Activated CD4-positive, alpha-beta T cell treated with anti-CD3 and anti-CD28 coated beads for 36 hours (primary cell): ENCODE measurements at regions of chr1 and their contacts with region 1.

Region 1: DNA sequence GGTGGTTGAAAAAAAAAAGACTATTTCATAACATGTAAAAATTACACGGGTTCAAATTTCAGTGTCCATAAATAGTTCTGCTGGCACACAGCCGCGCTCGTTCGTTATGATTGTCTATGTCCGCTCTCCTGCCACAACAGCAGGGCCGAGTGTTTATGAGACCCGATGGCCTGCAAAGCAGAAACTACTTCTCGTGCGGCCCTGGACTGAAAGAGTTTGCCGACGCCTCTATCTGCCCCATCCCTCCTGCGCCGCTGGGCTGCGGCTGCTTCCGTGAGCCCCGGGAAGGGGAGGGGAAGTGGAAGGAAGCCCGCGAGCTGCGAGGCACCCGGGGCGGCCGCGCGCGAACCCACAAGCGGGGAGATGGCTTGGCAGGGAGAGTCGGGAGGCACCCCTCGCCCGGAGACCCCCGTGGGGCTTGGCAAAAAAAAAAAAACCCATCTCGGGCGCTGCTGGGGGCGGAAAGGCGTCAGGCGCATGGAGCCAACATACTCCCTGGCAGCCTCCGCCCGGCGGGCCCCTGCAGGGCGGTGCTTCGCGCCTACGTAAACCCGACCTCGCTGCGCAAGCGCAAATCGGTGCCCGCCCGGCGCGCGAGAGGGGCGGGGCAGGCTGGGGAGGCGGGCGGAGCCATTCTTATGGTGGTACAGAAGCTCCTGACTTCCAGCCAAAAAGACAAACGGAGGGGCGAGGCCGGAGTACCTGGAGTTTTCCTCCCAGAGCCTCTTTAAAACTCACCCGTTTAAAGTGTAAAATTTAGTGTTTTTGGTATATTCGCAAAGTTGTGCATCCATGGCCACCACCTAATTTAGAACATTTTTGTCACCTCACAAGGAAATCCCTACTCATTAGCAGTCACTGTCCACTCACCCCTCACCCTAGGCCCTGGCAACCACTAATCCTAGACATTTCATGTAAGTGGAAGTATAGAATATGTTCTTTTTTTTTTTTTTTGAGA is 8.3 kb downstream of the SLC27A3 start:
- DNase-seq: peak; percentile 95
- ATAC-seq: peak; percentile 96
- H3K4me3 Mint-ChIP-seq: peak overlapping the region; percentile 90
- H3K27ac Mint-ChIP-seq: peak overlapping the region; percentile 97
- H3K4me1 Mint-ChIP-seq: peaks cover 12% of the 10 kb centered on the region
- H3K27me3 Mint-ChIP-seq: no peaks in the 10 kb centered on the region

Region 2: DNA sequence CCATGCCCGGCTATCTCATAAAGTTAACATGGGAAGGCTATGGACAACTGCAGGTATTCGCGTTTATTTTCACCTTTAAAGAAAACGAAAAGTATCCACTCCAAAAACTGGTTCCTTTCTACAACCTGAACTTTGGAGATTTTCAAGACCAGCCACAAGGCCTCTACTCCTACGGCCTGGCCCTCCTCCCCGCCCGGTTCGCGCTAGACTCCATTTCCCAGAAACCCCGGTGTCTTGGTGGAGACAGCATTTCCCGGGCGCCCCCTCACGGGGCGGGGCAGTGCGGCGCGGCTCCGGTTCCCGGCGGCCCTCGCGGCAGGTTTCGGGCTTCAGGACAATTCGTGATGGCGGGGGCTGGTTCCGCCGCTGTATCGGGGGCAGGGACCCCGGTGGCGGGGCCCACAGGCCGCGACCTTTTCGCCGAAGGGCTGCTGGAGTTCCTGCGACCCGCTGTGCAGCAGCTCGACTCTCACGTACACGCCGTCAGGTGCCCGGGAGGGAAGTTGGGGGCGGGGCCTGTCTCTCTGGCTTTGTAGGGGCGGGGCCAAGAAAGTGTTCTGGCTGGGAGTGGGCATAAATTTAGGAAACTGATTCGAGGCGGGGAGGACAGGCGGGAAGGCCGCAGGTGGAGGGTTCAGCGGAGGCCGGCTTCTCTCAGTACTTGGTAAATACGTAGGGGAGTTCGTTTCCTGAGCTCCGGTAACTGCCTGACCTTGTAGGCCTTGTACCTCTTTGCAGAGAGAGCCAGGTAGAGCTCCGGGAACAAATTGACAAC is 124.9 kb before region 1 on chr1 and contains the start of gene SNAPIN:
- CTCF ChIA-PET with region 1: no interaction called
- POLR2A ChIA-PET with region 1: interaction called, 3 read pairs
- intact Hi-C with region 1: loop called in 1 of 2 experiments (anchors 1 kb)
- DNase-seq: peak; percentile 96
- ATAC-seq: peak; percentile 96
- H3K4me3 Mint-ChIP-seq: peak within 1 kb of the TSS; percentile 95
- H3K27ac Mint-ChIP-seq: peak within 1 kb of the TSS; percentile 90
- H3K4me1 Mint-ChIP-seq: peaks cover 13% of the 10 kb centered on the region
- H3K27me3 Mint-ChIP-seq: no peaks in the 10 kb centered on the region
- total RNA-seq, gene SNAPIN: 34.2 to 38.4 TPM

Region 3: GRCh38 chr1:153805042-153805745 is 21.7 kb after region 1 on chr1:
- CTCF ChIA-PET with region 1: no interaction called
- POLR2A ChIA-PET with region 1: no interaction called
- intact Hi-C with region 1: loop called in 1 of 2 experiments (anchors 1 kb)
- DNase-seq: peak; percentile 87
- ATAC-seq: peak; percentile 98
- H3K4me3 Mint-ChIP-seq: peak overlapping the region; percentile 28
- H3K27ac Mint-ChIP-seq: peak overlapping the region; percentile 85
- H3K4me1 Mint-ChIP-seq: peaks cover 30% of the 10 kb centered on the region
- H3K27me3 Mint-ChIP-seq: no peaks in the 10 kb centered on the region

Region 4: DNA sequence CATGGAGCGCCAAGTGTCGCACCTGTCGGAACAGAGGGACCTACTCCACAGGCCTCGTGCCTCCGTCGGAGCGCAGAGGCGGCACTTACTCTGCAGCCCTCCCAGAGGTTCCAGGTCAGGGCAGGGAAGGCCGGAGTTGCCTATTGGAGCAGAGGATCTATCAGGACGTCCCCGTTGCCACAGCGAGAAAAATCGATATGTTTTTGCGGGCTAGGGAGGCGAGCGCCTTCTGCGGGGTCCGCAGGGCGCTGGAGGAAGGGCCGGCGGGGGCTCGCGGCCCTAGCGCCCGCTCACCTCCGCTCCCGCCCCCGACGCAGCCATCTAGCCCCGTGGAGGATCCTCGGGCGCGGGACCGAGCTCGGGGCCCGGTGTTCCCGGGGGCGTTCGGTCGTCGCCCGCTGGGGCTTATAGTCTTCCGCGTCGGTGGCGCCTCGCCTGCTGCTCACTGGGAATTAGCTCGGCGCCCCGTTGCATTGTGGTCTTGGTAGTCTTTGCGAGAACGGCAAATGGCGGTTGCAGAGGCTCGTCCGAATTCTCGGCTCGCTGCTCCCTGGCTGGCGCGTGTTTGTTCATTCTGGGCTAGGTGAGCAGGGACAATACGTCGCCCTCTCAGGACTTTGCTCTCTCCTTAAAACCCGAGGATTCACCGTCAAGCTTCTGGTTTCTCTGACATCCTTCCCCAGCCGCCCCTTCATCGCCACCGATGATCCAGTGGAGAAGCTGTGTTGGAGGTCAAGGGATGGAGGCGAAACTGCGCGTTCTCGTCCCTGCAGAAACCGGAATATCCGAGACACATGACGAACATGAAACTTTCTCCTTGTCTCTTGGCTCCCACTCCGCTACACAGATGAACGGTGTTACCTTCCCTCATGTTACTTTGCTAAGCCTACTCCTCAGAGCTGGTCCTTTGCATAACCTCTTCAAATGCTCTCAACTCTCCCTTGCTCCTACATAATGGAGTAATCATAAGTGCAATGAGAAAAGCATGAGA is 194.0 kb after region 1 on chr1 and contains the start of gene JTB:
- CTCF ChIA-PET with region 1: interaction called, 3 read pairs
- POLR2A ChIA-PET with region 1: no interaction called
- intact Hi-C with region 1: loop called in 1 of 2 experiments (anchors 1 kb)
- DNase-seq: peak; percentile 94
- ATAC-seq: peak; percentile 95
- H3K4me3 Mint-ChIP-seq: peak within 1 kb of the TSS; percentile 97
- H3K27ac Mint-ChIP-seq: peak within 1 kb of the TSS; percentile 97
- H3K4me1 Mint-ChIP-seq: peaks cover 33% of the 10 kb centered on the region
- H3K27me3 Mint-ChIP-seq: no peaks in the 10 kb centered on the region
- total RNA-seq, gene JTB: 107 to 145 TPM